ENCODE measurements at regions of chr3 and their contacts with region 1.

Region 1: DNA sequence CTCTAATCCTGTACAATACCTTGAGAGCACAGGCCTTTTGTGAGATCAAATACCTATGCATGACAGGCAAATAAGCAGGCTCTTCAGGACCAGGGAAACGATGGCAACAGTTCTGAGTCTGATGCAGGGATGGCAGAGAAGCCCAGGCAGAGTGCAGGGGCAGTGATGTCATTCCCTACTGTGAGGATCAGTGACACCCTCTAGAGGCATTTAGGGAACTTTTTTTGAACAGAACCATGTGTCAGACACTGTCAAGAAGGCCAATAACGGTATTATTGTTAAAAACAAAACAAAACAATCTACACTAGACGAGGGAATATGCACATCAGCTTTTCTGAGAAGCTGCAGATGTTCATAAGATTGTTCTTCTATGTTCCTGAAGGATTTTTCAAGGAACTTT is 314.8 kb upstream of the CTDSPL start:
- DNase-seq: peak; percentile 55 to 76 (median 72)
- H3K4me3 ChIP-seq: no peak overlapping the region
- H3K27ac ChIP-seq: no peak overlapping the region
- H3K4me1 ChIP-seq: peaks cover 2 to 13% (median 6%) of the 10 kb centered on the region in 4 experiments
- H3K27me3 ChIP-seq: no peaks in the 10 kb centered on the region

Region 2: GRCh38 chr3:37492977-37493471 is 53.9 kb before region 1 on chr3:
- CTCF ChIA-PET with region 1: no interaction called
- POLR2A ChIA-PET with region 1: no interaction called
- DNase-seq: peak in 2 of 3 donors; percentile 69 to 74
- H3K4me3 ChIP-seq: peak overlapping the region in 2 of 7 experiments; percentile 40 to 48
- H3K27ac ChIP-seq: peak overlapping the region; percentile 42 to 62
- H3K4me1 ChIP-seq: peaks cover 17 to 44% (median 41%) of the 10 kb centered on the region in 4 experiments
- H3K27me3 ChIP-seq: no peaks in the 10 kb centered on the region

Region 3: GRCh38 chr3:37532168-37532567 is 14.7 kb before region 1 on chr3:
- CTCF ChIA-PET with region 1: interaction called, 23 read pairs
- POLR2A ChIA-PET with region 1: interaction called, 3 read pairs
- DNase-seq: no peak
- H3K4me3 ChIP-seq: no peak overlapping the region
- H3K27ac ChIP-seq: no peak overlapping the region
- H3K4me1 ChIP-seq: peaks cover 0 to 30% (median 12%) of the 10 kb centered on the region in 4 experiments
- H3K27me3 ChIP-seq: no peaks in the 10 kb centered on the region

Region 4: GRCh38 chr3:37559461-37559860 is 12.6 kb after region 1 on chr3:
- CTCF ChIA-PET with region 1: interaction called, 19 read pairs
- POLR2A ChIA-PET with region 1: no interaction called
- DNase-seq: peak; percentile 20 to 60 (median 49)
- H3K4me3 ChIP-seq: peak overlapping the region in 1 of 7 experiments; percentile 7
- H3K27ac ChIP-seq: no peak overlapping the region
- H3K4me1 ChIP-seq: peaks cover 7 to 41% (median 33%) of the 10 kb centered on the region in 4 experiments
- H3K27me3 ChIP-seq: no peaks in the 10 kb centered on the region